Mucosa of descending colon (tissue), 3 donors: ENCODE measurements at regions of chr16 and their contacts with region 1.

Region 1: DNA sequence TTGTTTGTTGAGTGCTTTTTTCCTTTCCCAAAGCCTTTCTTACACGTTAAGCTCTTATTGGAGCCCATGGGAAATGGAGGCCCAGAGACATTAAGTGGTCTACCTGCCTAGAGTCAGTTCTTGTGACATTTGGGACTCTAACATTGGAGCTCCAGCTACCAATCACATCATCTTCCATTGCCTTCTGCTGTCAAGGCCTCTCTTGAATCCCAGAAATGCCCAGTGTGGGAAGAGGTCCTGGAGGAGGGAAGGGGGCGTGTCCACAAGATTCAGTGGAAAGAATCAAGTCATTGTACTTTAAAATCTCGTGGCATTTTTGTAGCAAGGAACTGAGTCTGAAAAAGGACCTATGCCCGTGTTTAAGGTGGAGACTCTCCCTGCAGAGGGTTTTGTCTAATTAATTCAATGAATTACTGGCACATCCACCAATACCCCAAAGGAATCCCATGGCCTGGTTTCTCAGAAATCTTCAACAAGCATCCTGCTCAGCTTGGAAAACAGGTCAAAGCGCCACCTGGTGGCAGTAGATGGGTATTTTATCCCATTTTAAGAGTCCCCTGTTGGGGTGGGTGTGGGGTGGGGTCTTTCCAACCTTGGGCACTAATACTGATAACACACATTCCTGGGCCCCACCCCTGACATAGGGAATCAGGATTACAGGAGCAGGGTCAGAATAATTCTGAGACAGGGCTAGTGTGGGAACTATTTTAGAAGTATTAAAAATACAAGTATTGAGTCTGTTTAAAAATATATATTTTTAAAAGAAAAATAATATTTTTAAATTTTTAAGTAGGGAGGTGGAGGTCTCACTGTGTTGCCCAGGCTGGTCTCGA is 24.6 kb downstream of the GPT2 start:
- DNase-seq: peak in 1 of 3 donors; percentile 66
- ATAC-seq: peak; percentile 59
- H3K4me3 ChIP-seq: no peak overlapping the region
- H3K4me1 ChIP-seq: peaks cover 4% of the 10 kb centered on the region
- CTCF ChIP-seq: peak; percentile 31

Region 2: GRCh38 chr16:46621006-46621933 is 287.5 kb before region 1 on chr16 and contains the start of gene SHCBP1:
- intact Hi-C with region 1: no loop called
- DNase-seq: peak; percentile 82 to 87 (median 84)
- ATAC-seq: peak; percentile 90
- H3K4me3 ChIP-seq: peak within 1 kb of the TSS; percentile 6
- H3K4me1 ChIP-seq: no peaks in the 10 kb centered on the region
- CTCF ChIP-seq: no peak
- total RNA-seq, gene SHCBP1: 0.63 to 7.7 (median 2.3) TPM

Region 3: GRCh38 chr16:46853713-46854443 is 54.9 kb before region 1 on chr16:
- intact Hi-C with region 1: loop called (anchors 5 kb)
- DNase-seq: peak in 2 of 3 donors; percentile 88
- ATAC-seq: peak; percentile 75
- H3K4me3 ChIP-seq: no peak overlapping the region
- H3K4me1 ChIP-seq: peaks cover 8% of the 10 kb centered on the region
- CTCF ChIP-seq: peak; percentile 66